ENCODE measurements at regions of chr5 and their contacts with region 1.

Region 1: GRCh38 chr5:181159286-181159829 is 12.0 kb downstream of the OR2V2 start:
- DNase-seq: peak; percentile 90 to 92
- H3K4me3 ChIP-seq: no peak overlapping the region
- H3K27ac ChIP-seq: peak overlapping the region in 1 of 5 donors; percentile 81
- H3K4me1 ChIP-seq: peaks cover 0 to 16% (median 4%) of the 10 kb centered on the region in 4 donors
- H3K27me3 ChIP-seq: peaks cover 0 to 46% (median 11%) of the 10 kb centered on the region in 3 donors
- CTCF ChIP-seq: peak in 5 of 7 experiments; percentile 69 to 88 (median 76)
- EP300 ChIP-seq: no peak
- POLR2A ChIP-seq: no peak

Region 2: GRCh38 chr5:180860887-180861822 is 298.2 kb before region 1 on chr5 and contains the start of gene ZFP62:
- intact Hi-C with region 1: loop called (anchors 10 kb)
- DNase-seq: peak; percentile 93 to 97
- H3K4me3 ChIP-seq: peak within 1 kb of the TSS; percentile 78 to 93 (median 89)
- H3K27ac ChIP-seq: peak within 1 kb of the TSS; percentile 90 to 97 (median 94)
- H3K4me1 ChIP-seq: peaks cover 8 to 23% (median 15%) of the 10 kb centered on the region in 4 donors
- H3K27me3 ChIP-seq: no peaks in the 10 kb centered on the region
- CTCF ChIP-seq: peak in 2 of 7 experiments; percentile 8 to 26
- EP300 ChIP-seq: no peak
- POLR2A ChIP-seq: no peak
- total RNA-seq, gene ZFP62: 8.2 to 46.9 (median 16.5) TPM